Posterior cingulate gyrus (tissue), 11 donors: ENCODE measurements at regions of chr1 and their contacts with region 1.

Region 1: DNA sequence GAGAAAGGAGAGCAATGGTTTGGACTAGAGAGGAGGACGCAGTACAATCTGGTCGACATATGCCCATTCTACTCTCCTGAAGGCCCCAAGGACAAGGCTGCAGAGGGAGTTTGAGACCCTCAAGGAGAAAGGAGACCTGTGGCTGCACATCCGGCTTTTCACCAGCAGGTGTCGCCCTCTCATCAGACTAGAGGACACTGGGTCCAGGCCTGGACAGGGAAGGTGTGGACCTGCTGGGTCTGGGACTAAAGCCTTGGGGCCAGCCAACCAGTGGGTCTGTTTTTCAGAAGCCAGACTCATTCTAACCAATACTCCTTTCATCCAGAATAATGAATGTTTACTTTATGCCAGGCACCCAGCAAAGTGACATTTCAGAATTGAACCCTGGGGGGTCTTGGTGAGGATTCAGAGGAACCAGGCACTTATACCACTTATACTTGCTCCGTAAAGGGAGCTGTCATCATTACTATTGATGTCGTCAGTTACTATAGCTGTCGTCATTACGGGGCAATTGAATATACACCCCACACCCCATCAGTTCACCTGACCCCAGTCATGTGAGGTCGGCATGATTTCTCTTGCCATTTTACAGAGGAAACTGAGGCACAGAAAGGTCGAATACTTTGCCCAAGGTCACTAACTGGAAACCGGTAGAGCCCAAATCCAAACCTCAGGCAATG is 5.1 kb downstream of the SRARP start:
- DNase-seq: peak; percentile 57 to 97 (median 84)

Region 2: GRCh38 chr1:15975805-15976680 is 33.1 kb before region 1 on chr1 and contains the start of gene ZBTB17:
- intact Hi-C with region 1: no loop called
- DNase-seq: peak; percentile 80 to 98 (median 88)

Region 3: GRCh38 chr1:16032388-16033103 is 23.4 kb after region 1 on chr1:
- intact Hi-C with region 1: loop called (anchors 2 kb)
- DNase-seq: peak; percentile 39 to 95 (median 70)

Region 4: DNA sequence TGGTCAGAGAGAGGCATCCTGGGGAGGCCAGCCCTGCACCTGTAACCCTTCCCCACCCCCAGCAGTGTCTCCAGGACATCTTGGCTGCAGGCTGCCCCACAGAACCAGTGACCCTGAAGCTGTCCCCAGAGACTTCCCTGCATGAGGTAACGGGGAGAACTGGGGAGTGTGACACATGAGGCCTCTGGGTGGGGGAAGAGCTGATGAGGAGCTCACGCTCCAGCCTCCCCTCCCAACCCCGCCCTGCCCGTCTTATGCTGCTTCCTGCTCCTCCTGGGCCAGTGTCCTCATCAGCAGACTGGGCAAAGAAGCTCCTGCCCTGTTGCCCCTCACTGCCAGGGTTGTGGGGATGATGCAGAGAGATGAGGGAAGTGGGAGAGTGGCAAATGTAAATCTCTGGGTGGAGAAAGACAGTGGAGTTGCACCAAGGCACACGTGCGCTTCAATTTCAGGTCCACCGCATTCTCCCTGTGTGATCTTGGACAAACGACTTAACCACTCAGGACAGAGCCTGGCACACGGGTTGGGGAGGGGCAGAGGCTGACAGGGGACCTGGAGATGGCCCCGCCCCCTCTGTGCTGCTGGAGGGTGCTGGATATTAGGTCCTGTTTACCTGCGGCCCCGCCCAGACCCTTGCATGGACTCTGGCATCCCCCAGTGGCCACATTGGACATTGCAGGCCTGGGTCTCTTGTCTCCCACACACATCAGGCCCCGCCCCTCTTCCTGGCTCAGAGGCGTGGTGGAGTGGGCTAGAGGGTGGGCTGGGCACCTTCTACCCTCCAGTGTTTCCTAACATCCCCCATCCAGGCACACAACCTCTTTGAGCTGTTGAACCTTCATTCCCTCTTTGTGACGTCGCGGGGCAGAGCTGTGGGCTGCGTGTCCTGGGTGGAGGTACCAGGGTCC is 46.7 kb after region 1 on chr1:
- intact Hi-C with region 1: loop called (anchors 2 kb)
- DNase-seq: peak; percentile 60 to 96 (median 80)